ENCODE measurements at regions of chr19 and their contacts with region 1.

Region 1: GRCh38 chr19:11597202-11598102 is at the start of gene ZNF627:
- DNase-seq: peak; percentile 79
- ATAC-seq: peak; percentile 100
- H3K4me3 ChIP-seq: peak within 1 kb of the TSS; percentile 82 to 93
- H3K27ac ChIP-seq: peak within 1 kb of the TSS; percentile 91
- H3K4me1 ChIP-seq: 0 out of 2 replicates have a peak, but pooled peaks cover 6% of the 10 kb centered on the region
- H3K27me3 ChIP-seq: no peaks in the 10 kb centered on the region
- CTCF ChIP-seq: no peak
- total RNA-seq, gene ZNF627: 10.7 TPM

Region 2: DNA sequence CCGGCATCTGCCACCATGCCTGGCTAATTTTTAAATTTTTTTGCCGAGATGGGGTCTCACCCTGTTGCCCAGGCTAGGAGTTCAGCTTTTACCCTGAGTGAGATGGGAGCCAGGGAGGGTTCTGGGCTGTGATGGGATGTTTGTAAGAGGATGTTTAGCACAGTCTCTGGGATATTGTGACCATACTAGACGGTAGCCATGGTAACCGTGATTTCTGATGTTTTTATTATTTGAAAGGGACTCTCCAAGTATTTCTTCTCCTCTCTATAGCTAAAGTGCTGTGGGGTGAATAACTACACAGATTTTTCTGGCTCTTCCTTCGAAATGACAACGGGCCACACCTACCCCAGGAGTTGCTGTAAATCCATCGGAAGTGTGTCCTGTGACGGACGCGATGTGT is 291.1 kb before region 1 on chr19:
- CTCF ChIA-PET with region 1: no interaction called
- POLR2A ChIA-PET with region 1: interaction called, 13 read pairs
- in situ Hi-C with region 1: no loop called
- intact Hi-C with region 1: no loop called
- DNase-seq: no peak
- ATAC-seq: no peak
- H3K4me3 ChIP-seq: no peak overlapping the region
- H3K27ac ChIP-seq: no peak overlapping the region
- H3K4me1 ChIP-seq: no peaks in the 10 kb centered on the region
- H3K27me3 ChIP-seq: no peaks in the 10 kb centered on the region
- CTCF ChIP-seq: no peak

Region 3: DNA sequence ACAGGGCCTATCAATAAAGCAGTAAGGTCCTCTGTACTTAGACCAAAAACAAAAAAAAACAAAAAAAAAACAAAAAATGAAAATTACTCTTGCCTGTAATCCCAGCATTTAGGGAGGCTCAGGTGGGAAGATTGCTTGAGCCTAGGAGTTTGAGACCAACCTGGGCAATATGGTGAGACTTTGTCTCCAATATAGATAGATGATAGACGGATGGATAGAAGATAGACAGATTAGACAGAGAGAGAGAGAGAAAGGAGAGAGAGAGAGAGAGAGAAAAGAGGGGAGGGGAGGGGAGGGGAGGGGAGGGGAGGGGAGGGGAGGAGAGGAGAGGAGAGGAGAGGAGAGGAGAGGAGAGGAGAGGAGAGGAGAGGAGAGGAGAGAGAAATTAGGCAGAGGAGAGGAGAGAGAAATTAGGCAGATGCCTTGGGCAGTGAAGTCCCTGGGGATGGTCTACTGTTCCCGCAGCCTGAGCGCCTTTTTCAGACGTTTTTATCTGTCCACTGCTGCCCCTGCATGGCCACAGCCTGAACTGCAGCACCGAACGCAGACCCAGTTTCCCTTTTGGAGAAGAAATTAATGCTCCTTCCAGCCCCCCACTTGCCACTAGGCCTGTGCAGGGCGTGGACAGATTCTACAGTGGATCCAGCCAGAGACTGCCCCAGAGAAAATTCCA is 10.0 kb before region 1 on chr19:
- CTCF ChIA-PET with region 1: no interaction called
- POLR2A ChIA-PET with region 1: no interaction called
- in situ Hi-C with region 1: no loop called
- intact Hi-C with region 1: no loop called
- DNase-seq: peak; percentile 32
- ATAC-seq: peak; percentile 91
- H3K4me3 ChIP-seq: peak overlapping the region; percentile 18 to 46
- H3K27ac ChIP-seq: no peak overlapping the region
- H3K4me1 ChIP-seq: no peaks in the 10 kb centered on the region
- H3K27me3 ChIP-seq: no peaks in the 10 kb centered on the region
- CTCF ChIP-seq: peak; percentile 80

Region 4: GRCh38 chr19:11617207-11618062 is 20.0 kb after region 1 on chr19:
- CTCF ChIA-PET with region 1: no interaction called
- POLR2A ChIA-PET with region 1: no interaction called
- in situ Hi-C with region 1: no loop called
- intact Hi-C with region 1: no loop called
- DNase-seq: no peak
- ATAC-seq: no peak
- H3K4me3 ChIP-seq: no peak overlapping the region
- H3K27ac ChIP-seq: no peak overlapping the region
- H3K4me1 ChIP-seq: no peaks in the 10 kb centered on the region
- H3K27me3 ChIP-seq: no peaks in the 10 kb centered on the region
- CTCF ChIP-seq: no peak

Region 5: DNA sequence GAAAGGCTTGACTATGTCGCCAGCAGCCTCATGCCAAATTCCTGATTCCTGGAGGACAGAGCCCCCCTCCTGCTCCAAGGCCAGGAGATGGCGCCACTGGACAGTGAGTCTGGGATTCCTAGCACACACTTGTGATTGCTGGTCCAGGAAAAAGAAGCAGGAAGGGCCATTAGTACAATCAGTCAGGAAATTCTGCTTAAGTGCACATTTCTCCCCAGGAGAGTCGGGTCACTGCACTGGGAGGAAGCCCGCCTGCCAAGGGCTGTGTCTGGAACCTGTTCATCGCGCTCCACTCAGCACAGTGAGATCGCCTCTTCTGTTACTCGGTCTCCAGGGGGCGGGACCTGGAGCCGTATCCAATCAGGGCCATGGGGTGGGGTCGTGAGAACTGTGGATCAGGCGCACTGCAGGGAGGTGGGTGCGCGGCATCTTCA is 76.2 kb after region 1 on chr19:
- CTCF ChIA-PET with region 1: no interaction called
- POLR2A ChIA-PET with region 1: no interaction called
- in situ Hi-C with region 1: no loop called
- intact Hi-C with region 1: no loop called
- DNase-seq: no peak
- ATAC-seq: no peak
- H3K4me3 ChIP-seq: no peak overlapping the region
- H3K27ac ChIP-seq: no peak overlapping the region
- H3K4me1 ChIP-seq: no peaks in the 10 kb centered on the region
- H3K27me3 ChIP-seq: no peaks in the 10 kb centered on the region
- CTCF ChIP-seq: no peak

Measured in Panc1 (cell line).